Posterior vena cava (tissue), 2 donors: ENCODE measurements at regions of chr7 and their contacts with region 1.

Region 1: DNA sequence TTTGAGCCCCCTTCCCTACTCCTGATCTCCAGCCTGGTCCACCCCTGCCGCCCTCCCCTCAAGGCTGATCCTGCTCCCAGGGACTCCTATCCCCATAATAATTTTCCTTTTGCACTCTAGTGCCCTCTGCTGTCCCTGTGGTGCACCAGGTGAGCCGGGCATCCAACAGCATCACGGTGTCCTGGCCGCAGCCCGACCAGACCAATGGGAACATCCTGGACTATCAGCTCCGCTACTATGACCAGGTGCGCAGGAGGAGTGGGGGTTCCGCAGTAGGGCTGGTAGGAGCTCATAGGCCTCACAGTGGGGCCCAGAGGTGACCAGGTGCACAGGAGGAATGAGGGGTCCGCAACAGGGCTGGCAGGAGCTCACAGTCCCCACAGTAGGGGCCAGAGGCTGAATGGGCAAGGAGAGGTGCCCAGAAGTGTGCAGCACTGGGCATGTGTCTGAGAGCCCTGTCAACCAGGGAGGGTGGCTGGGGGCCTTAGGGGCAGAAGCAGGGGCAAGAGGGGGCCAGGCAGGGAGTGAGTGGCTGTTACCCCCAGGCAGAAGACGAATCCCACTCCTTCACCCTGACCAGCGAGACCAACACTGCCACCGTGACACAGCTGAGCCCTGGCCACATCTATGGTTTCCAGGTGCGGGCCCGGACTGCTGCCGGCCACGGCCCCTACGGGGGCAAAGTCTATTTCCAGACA is 11.6 kb downstream of the EPHB6 start:
- DNase-seq: no peak

Region 2: GRCh38 chr7:141884539-141885225 is 981.8 kb before region 1 on chr7:
- intact Hi-C with region 1: loop called in 1 of 2 experiments (anchors 5 kb)
- DNase-seq: no peak

Region 3: GRCh38 chr7:142807855-142808460 is 58.6 kb before region 1 on chr7:
- intact Hi-C with region 1: no loop called
- DNase-seq: no peak

Region 4: GRCh38 chr7:142992464-142992863 is 126.0 kb after region 1 on chr7:
- intact Hi-C with region 1: loop called in 1 of 2 experiments (anchors 10 kb)
- DNase-seq: no peak

Region 5: DNA sequence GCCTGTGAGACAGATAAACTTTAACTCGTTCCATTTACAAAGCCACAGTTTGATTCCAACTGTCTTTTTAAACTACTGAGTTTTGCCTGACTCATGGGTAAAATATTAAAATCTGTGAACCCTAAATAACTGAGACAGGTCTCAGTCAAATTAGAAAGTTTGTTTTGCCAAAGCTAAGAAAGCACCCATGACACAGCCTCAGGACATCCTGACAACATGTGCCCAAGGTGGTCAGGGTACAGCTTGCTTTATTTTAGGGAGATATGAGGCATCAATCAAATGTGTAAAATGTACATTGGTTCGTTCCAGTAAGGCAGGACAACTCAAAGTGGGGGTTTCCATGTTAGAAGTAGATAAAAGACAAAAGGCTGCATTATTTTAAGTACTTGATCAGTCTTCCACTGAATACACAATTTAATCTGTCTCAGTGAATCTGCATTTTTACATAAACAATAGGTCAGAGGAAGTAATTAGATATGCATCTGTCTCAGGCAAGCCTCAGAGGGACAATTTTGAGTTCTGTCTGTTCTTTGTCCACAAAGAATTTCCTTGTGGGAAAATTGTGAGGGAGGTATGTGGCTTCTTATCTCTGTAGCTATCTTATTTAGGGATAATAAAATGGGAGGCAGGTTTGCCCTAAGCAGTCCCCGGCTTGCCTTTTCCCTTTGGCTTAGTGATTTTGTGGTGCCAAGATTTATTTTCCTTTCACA is 254.3 kb after region 1 on chr7:
- intact Hi-C with region 1: no loop called
- DNase-seq: no peak